ENCODE measurements at regions of chr3 and their contacts with region 1.

Region 1: DNA sequence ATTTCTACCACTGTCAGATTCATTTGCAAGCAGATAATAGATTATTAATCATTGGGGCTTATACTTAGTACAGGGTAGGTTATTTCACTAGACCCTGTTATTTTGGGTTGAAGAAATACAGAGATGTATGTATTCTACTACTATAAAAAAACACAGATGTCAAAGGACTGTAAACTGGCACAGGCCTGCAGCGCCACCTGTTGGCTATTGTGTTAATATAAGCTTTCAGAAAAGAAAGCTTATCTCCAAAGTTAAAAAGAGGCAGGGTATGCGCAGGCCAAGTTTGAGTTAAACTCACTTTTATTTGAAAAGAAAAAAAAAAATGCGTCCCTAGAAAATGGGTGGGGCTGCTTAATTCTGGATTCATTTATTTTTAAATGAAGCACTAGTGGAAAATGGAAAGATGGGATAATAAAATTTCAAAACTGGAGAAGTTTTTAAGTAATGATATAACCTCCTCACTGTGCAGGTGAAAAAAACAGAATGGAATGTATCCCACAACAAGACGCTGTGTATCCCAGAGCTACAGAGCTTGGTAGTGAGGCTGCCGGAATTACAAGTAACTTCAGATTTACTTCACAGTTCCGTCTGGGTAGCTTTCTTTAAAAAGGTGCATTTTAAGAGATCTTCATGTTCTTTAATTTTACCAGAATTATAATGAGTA is 407.2 kb upstream of the TGFBR2 start:
- DNase-seq: peak; percentile 77
- ATAC-seq: peak; percentile 59
- H3K4me3 ChIP-seq: no peak overlapping the region
- H3K27ac ChIP-seq: no peak overlapping the region
- H3K4me1 ChIP-seq: no peaks in the 10 kb centered on the region
- H3K27me3 ChIP-seq: no peaks in the 10 kb centered on the region
- CTCF ChIP-seq: peak; percentile 93

Region 2: GRCh38 chr3:30012941-30013543 is 186.2 kb before region 1 on chr3:
- CTCF ChIA-PET with region 1: interaction called, 5 read pairs
- POLR2A ChIA-PET with region 1: no interaction called
- intact Hi-C with region 1: loop called (anchors 1 kb)
- DNase-seq: peak; percentile 92
- ATAC-seq: peak; percentile 89
- H3K4me3 ChIP-seq: no peak overlapping the region
- H3K27ac ChIP-seq: no peak overlapping the region
- H3K4me1 ChIP-seq: peaks cover 8% of the 10 kb centered on the region
- H3K27me3 ChIP-seq: no peaks in the 10 kb centered on the region
- CTCF ChIP-seq: peak; percentile 94

Region 3: GRCh38 chr3:30042274-30042859 is 156.9 kb before region 1 on chr3:
- CTCF ChIA-PET with region 1: interaction called, 21 read pairs
- POLR2A ChIA-PET with region 1: no interaction called
- intact Hi-C with region 1: loop called (anchors 1 kb)
- DNase-seq: peak; percentile 84
- ATAC-seq: peak; percentile 87
- H3K4me3 ChIP-seq: no peak overlapping the region
- H3K27ac ChIP-seq: no peak overlapping the region
- H3K4me1 ChIP-seq: no peaks in the 10 kb centered on the region
- H3K27me3 ChIP-seq: no peaks in the 10 kb centered on the region
- CTCF ChIP-seq: peak; percentile 93

Region 4: GRCh38 chr3:30135190-30135589 is 64.0 kb before region 1 on chr3:
- CTCF ChIA-PET with region 1: interaction called, 25 read pairs
- POLR2A ChIA-PET with region 1: no interaction called
- intact Hi-C with region 1: no loop called
- DNase-seq: peak; percentile 48
- ATAC-seq: peak; percentile 51; the same call in 1 of the 2 replicates
- H3K4me3 ChIP-seq: no peak overlapping the region
- H3K27ac ChIP-seq: no peak overlapping the region
- H3K4me1 ChIP-seq: no peaks in the 10 kb centered on the region
- H3K27me3 ChIP-seq: no peaks in the 10 kb centered on the region
- CTCF ChIP-seq: peak; percentile 63